Mammary epithelial cell (primary cell): ENCODE measurements at regions of chr3 and their contacts with region 1.

Region 1: GRCh38 chr3:64023187-64023848 is at the start of gene PSMD6:
- DNase-seq: peak; percentile 81
- H3K4me3 ChIP-seq: peak within 1 kb of the TSS; percentile 81 to 95 (median 85)
- H3K27ac ChIP-seq: peak within 1 kb of the TSS; percentile 90
- H3K4me1 ChIP-seq: peaks cover 10% of the 10 kb centered on the region
- H3K27me3 ChIP-seq: no peaks in the 10 kb centered on the region
- CTCF ChIP-seq: peak; percentile 96 to 100
- total RNA-seq, gene PSMD6: 70.7 to 85.9 TPM

Region 2: GRCh38 chr3:63961891-63962290 is 61.4 kb before region 1 on chr3:
- CTCF ChIA-PET with region 1: interaction called, 30 read pairs
- dilution Hi-C with region 1: no loop called
- in situ Hi-C with region 1: no loop called
- intact Hi-C with region 1: no loop called
- DNase-seq: peak; percentile 71
- H3K4me3 ChIP-seq: no peak overlapping the region
- H3K27ac ChIP-seq: no peak overlapping the region
- H3K4me1 ChIP-seq: peaks cover 38% of the 10 kb centered on the region
- H3K27me3 ChIP-seq: no peaks in the 10 kb centered on the region
- CTCF ChIP-seq: peak; percentile 62 to 73

Region 3: DNA sequence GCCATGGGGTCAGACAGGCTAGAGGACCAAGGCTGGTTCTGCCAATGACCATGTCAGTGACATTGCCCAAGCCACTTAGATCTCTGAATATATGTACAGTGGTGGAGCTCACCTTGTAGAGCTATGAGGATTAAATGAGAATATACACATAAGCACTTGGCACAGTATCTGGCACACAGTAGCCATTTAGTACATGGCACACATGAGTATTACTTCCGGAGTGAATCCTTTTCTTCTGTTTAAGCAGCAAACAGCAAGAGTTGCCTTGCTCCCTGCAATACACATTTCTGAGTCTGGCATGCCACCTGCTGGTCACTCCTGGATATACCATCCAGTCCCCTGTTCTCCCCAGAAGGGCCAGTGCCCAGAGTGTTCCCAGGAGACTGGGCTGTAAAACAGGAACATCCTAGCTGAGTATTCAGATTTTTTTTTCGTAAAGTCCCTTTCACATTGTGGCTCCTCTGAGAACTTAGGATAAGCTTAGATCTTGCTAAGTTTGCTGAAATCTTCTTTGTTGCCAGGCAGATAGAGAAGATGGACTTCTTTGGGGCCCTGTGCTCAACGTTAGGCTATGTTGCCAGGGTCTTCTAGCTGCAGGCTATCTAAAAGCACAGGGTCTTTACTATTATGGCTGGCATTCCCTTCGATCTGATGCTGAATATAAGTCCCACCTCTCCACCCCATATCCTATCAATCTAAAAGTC is 461.1 kb after region 1 on chr3:
- CTCF ChIA-PET with region 1: interaction called, 4 read pairs
- dilution Hi-C with region 1: no loop called
- in situ Hi-C with region 1: loop called in 1 of 2 experiments (anchors 10 kb)
- intact Hi-C with region 1: loop called (anchors 2 kb)
- DNase-seq: peak; percentile 58
- H3K4me3 ChIP-seq: no peak overlapping the region
- H3K27ac ChIP-seq: no peak overlapping the region
- H3K4me1 ChIP-seq: peaks cover 4% of the 10 kb centered on the region
- H3K27me3 ChIP-seq: no peaks in the 10 kb centered on the region
- CTCF ChIP-seq: peak; percentile 73 to 88